B cell (primary cell): ENCODE measurements at regions of chr1 and their contacts with region 1.

Region 1: DNA sequence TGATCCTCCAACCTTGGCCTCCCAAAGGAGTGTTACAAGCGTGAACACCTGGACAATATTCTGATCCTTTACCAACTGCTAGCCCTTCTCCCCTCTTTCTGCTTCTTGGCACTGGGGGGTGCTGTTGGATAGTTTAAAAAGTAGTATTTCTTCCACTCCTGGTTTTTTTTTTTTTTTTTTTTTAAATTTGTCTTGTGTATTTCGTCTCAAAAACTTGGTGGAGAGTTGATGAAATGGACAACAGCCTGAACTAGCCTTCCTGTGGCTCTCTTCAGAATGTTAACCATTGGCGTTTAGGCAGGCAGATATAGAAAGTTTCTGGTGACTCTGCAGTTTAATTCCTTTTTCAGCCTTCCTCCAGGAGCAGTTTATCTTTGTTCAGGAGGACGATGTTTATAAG is 69.7 kb upstream of the USP24 start:
- DNase-seq: peak; percentile 46
- ATAC-seq: no peak
- H3K4me3 ChIP-seq: no peak overlapping the region
- H3K4me3 Mint-ChIP-seq: no peak overlapping the region
- H3K27ac ChIP-seq: no peak overlapping the region
- H3K27ac Mint-ChIP-seq: no peak overlapping the region
- H3K4me1 ChIP-seq: peaks cover 8 to 16% of the 10 kb centered on the region in 2 donors
- H3K4me1 Mint-ChIP-seq: peaks cover 37% of the 10 kb centered on the region
- H3K27me3 ChIP-seq: no peaks in the 10 kb centered on the region
- H3K27me3 Mint-ChIP-seq: peaks cover 7% of the 10 kb centered on the region
- CTCF ChIP-seq: peak; percentile 68

Region 2: GRCh38 chr1:55257958-55258357 is 26.9 kb before region 1 on chr1:
- CTCF ChIA-PET with region 1: interaction called, 11 read pairs
- POLR2A ChIA-PET with region 1: no interaction called
- intact Hi-C with region 1: no loop called
- DNase-seq: peak; percentile 87
- ATAC-seq: peak; percentile 53
- H3K4me3 ChIP-seq: peak overlapping the region in 1 of 5 experiments; percentile 24
- H3K4me3 Mint-ChIP-seq: peak overlapping the region; percentile 75
- H3K27ac ChIP-seq: peak overlapping the region; percentile 84 to 89
- H3K27ac Mint-ChIP-seq: peak overlapping the region; percentile 94
- H3K4me1 ChIP-seq: peaks cover 74 to 75% of the 10 kb centered on the region in 2 donors
- H3K4me1 Mint-ChIP-seq: peaks cover 78% of the 10 kb centered on the region
- H3K27me3 ChIP-seq: no peaks in the 10 kb centered on the region
- H3K27me3 Mint-ChIP-seq: no peaks in the 10 kb centered on the region
- CTCF ChIP-seq: no peak

Region 3: DNA sequence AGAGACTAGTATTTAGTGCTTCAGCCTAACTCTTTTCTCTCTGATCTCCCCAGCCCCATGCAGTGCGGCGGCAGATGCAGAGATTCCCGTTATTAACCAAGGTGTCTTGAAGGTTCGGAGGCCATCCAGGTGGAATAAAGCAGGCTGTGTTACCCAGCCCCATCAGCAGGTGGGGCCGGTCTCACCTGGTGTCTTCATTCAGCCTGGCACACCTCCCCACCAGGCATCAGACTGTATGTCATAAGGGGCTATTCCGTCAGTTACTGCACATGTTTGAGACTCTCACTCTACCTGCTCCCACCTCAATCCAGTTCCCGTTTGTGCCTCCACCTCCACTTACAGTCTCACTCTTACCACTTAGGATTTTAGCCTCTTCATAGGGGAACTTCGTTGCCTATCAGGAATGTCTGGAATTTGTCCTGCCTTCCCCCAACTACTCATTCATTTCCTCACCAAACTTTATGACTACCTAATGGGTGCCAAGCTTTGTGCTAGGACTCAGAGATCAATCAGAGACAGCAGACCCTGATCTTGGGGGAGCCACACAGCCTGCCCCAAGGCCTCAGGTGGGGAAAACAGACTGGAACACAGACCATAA is 1124.3 kb after region 1 on chr1:
- CTCF ChIA-PET with region 1: no interaction called
- POLR2A ChIA-PET with region 1: no interaction called
- intact Hi-C with region 1: loop called (anchors 5 kb)
- DNase-seq: peak; percentile 61
- ATAC-seq: no peak
- H3K4me3 ChIP-seq: no peak overlapping the region
- H3K4me3 Mint-ChIP-seq: no peak overlapping the region
- H3K27ac ChIP-seq: no peak overlapping the region
- H3K27ac Mint-ChIP-seq: no peak overlapping the region
- H3K4me1 ChIP-seq: peaks cover 11 to 16% of the 10 kb centered on the region in 2 donors
- H3K4me1 Mint-ChIP-seq: peaks cover 27% of the 10 kb centered on the region
- H3K27me3 ChIP-seq: no peaks in the 10 kb centered on the region
- H3K27me3 Mint-ChIP-seq: no peaks in the 10 kb centered on the region
- CTCF ChIP-seq: peak; percentile 67

Region 4: GRCh38 chr1:56709269-56709880 is 1424.5 kb after region 1 on chr1:
- CTCF ChIA-PET with region 1: interaction called, 56 read pairs
- POLR2A ChIA-PET with region 1: no interaction called
- intact Hi-C with region 1: loop called (anchors 1 kb)
- DNase-seq: peak; percentile 61
- ATAC-seq: no peak
- H3K4me3 ChIP-seq: no peak overlapping the region
- H3K4me3 Mint-ChIP-seq: no peak overlapping the region
- H3K27ac ChIP-seq: no peak overlapping the region
- H3K27ac Mint-ChIP-seq: no peak overlapping the region
- H3K4me1 ChIP-seq: no peaks in the 10 kb centered on the region
- H3K4me1 Mint-ChIP-seq: no peaks in the 10 kb centered on the region
- H3K27me3 ChIP-seq: peaks cover 0 to 3% (median 0%) of the 10 kb centered on the region in 4 experiments
- H3K27me3 Mint-ChIP-seq: peaks cover 25% of the 10 kb centered on the region
- CTCF ChIP-seq: peak; percentile 90